WTC11 (cell line): ENCODE measurements at regions of chr2 and their contacts with region 1.

Region 1: DNA sequence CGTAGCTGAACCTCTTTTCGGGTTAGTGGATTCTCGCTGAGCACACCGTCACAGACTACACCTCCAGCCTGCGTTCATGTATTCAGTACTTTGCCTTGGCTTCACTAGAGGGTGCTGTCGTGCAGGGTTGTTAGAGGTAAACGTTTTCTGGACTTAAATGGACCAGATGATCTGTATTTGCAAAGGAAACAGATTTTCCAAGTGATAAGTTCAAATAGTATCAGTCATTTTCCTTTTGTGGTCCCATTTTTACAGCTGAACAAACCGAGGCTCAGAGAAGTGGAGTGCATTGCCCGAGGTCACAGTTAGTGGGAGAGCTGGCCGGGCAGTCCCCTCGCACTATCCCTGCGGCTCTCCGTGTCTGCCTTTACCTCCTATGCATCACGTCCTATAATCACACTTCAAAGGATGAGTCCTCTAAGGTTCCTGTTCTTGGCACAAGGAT is 125.9 kb downstream of the MAP4K4 start:
- DNase-seq: peak; percentile 71
- ATAC-seq: peak; percentile 94
- H3K4me3 Mint-ChIP-seq: no peak overlapping the region
- H3K27ac Mint-ChIP-seq: no peak overlapping the region
- H3K4me1 Mint-ChIP-seq: peaks cover 32% of the 10 kb centered on the region
- H3K27me3 Mint-ChIP-seq: no peaks in the 10 kb centered on the region
- CTCF ChIP-seq: peak; percentile 56

Region 2: GRCh38 chr2:101806123-101806522 is 17.2 kb before region 1 on chr2:
- CTCF ChIA-PET with region 1: interaction called, 11 read pairs
- POLR2A ChIA-PET with region 1: no interaction called
- DNase-seq: no peak
- ATAC-seq: peak; percentile 40
- H3K4me3 Mint-ChIP-seq: peak overlapping the region; percentile 8; the same call in 1 of the 2 replicates
- H3K27ac Mint-ChIP-seq: peak overlapping the region; percentile 93
- H3K4me1 Mint-ChIP-seq: peaks cover 76% of the 10 kb centered on the region
- H3K27me3 Mint-ChIP-seq: no peaks in the 10 kb centered on the region
- CTCF ChIP-seq: no peak

Region 3: DNA sequence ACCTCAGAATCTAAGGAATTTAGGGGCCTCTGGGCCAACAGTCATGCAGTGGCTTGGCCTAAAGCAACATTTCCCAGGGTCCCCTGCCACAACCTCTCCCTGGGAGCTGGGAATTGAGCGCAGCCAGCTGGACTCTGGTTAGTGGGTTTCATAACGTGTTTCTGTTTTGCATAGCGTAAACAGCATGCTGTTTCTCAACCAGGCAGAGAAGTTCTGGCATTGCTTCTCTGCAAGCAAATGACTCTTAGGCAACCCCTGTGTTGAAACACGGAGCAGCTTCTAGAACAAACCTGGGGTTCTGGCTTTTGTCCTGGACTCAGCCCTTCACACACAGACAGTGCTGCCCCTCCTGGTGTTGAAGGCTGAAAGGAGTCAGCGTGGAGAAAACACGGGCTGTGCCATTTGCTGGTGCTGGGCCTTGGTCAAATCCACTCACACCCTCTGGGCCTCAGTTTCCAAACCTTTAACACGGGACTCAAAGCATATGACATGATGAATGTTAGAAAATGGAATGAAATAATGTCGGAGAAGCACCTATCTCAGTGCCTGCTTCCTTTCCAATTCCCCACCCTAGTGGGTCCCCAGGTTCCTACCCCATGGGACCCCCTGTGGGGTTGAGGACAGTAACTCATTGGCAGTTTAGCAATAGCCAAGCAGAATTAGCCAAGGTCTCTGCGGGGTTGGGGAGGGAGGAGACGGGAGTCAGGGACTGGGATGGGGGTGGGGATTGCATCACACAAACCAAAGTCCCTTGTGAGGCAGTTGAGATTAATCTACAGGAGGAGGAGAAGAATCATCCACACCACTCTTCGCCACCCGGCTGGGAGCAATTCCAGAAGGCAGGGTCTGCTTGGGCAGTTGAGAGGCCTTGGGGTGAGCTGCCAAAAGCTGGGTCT is 138.2 kb after region 1 on chr2:
- CTCF ChIA-PET with region 1: no interaction called
- POLR2A ChIA-PET with region 1: no interaction called
- DNase-seq: no peak
- ATAC-seq: no peak
- H3K4me3 Mint-ChIP-seq: no peak overlapping the region
- H3K27ac Mint-ChIP-seq: no peak overlapping the region
- H3K4me1 Mint-ChIP-seq: peaks cover 10% of the 10 kb centered on the region
- H3K27me3 Mint-ChIP-seq: peaks cover 2% of the 10 kb centered on the region; the same call in 1 of the 2 replicates
- CTCF ChIP-seq: no peak